ENCODE measurements at regions of chr17 and their contacts with region 1.

Region 1: GRCh38 chr17:34420254-34420766 is 57.3 kb upstream of the CCL1 start:
- DNase-seq: peak; percentile 33 to 63
- ATAC-seq: peak; percentile 53

Region 2: GRCh38 chr17:34275881-34276280 is 144.4 kb before region 1 on chr17:
- intact Hi-C with region 1: no loop called
- DNase-seq: no peak
- ATAC-seq: no peak

Region 3: GRCh38 chr17:34637548-34638525 is 217.5 kb after region 1 on chr17:
- intact Hi-C with region 1: loop called (anchors 5 to 10 kb)
- DNase-seq: peak; percentile 51 to 83
- ATAC-seq: peak; percentile 96